ENCODE measurements at regions of chr3 and their contacts with region 1.

Region 1: GRCh38 chr3:157136647-157137387 is 23.1 kb downstream of the CCNL1 start:
- DNase-seq: peak; percentile 35 to 46
- H3K4me3 ChIP-seq: no peak overlapping the region; the same call in 1 of the 2 replicates
- H3K27ac ChIP-seq: no peak overlapping the region
- H3K4me1 ChIP-seq: peaks cover 25% of the 10 kb centered on the region
- H3K27me3 ChIP-seq: no peaks in the 10 kb centered on the region
- CTCF ChIP-seq: no peak

Region 2: DNA sequence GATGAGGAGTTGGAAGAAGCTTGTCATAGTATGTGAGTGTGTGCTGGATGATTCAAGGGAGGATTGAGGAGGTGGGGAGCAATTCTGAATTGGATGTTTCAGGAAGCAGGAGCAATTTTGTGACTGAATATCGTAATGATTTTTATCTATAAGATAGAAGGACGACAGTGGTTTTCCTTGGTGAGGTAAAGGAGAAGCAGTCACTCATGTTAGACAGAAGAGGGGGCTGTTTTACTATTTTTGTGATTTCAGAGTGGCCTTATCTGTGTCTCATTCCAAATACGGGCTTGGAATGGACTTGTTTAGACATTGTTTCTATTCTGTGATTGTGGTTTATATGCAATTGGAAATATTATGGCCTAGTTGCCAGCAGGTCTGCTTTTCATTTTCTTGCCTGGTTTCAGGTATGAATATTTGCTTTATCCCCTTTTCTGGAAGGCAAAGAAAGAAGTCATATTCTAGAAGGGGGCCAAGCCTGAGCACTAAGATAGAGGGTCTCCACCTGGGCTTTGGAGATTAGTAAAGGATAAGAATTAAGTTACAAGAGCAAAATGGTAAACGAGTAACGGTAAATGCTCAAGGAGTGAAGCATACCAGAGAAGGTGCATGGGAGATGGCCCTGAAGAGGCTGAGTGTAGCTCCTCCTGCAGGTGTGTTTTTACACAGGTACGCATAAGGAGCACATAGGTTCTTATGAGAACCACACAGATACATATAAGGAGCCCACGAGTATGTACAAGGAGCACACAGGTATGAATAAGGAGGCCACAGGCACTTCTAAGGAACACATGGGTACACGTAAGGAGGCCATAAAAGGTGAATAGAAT is 1141.1 kb before region 1 on chr3:
- CTCF ChIA-PET with region 1: no interaction called
- POLR2A ChIA-PET with region 1: no interaction called
- intact Hi-C with region 1: loop called (anchors 5 kb)
- DNase-seq: peak in 1 of 2 experiments; percentile 54
- H3K4me3 ChIP-seq: no peak overlapping the region
- H3K27ac ChIP-seq: no peak overlapping the region
- H3K4me1 ChIP-seq: no peaks in the 10 kb centered on the region
- H3K27me3 ChIP-seq: no peaks in the 10 kb centered on the region
- CTCF ChIP-seq: peak; percentile 80

Region 3: GRCh38 chr3:156040041-156040440 is 1096.8 kb before region 1 on chr3:
- CTCF ChIA-PET with region 1: interaction called, 3 read pairs
- POLR2A ChIA-PET with region 1: no interaction called
- intact Hi-C with region 1: loop called (anchors 5 kb)
- DNase-seq: no peak
- H3K4me3 ChIP-seq: no peak overlapping the region
- H3K27ac ChIP-seq: no peak overlapping the region
- H3K4me1 ChIP-seq: no peaks in the 10 kb centered on the region
- H3K27me3 ChIP-seq: no peaks in the 10 kb centered on the region
- CTCF ChIP-seq: no peak

Region 4: GRCh38 chr3:156535162-156535627 is 601.6 kb before region 1 on chr3:
- CTCF ChIA-PET with region 1: interaction called, 5 read pairs
- POLR2A ChIA-PET with region 1: no interaction called
- intact Hi-C with region 1: loop called (anchors 1 kb)
- DNase-seq: peak; percentile 70 to 98
- H3K4me3 ChIP-seq: no peak overlapping the region
- H3K27ac ChIP-seq: peak overlapping the region; percentile 72
- H3K4me1 ChIP-seq: peaks cover 21% of the 10 kb centered on the region
- H3K27me3 ChIP-seq: no peaks in the 10 kb centered on the region
- CTCF ChIP-seq: peak; percentile 59

Region 5: DNA sequence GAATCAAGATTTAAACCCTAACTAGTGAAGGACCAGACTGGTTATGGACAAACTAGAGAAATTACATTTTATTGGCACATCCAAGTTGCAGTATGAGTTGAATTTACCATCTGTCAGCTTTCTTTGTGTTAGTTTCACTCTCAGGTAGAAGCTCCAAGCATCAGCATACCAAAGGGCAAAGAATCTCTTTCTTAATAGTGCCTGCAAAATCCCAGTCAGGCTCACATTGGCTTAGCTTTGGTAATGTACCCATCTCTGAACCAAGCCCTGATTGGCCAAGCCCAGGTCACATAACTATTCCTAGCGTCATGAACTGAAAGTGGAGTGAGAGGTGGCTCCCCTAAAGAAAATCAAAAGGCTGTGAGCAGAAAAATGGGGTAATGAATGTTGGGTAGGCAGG is 43.7 kb before region 1 on chr3:
- CTCF ChIA-PET with region 1: no interaction called
- POLR2A ChIA-PET with region 1: no interaction called
- intact Hi-C with region 1: no loop called
- DNase-seq: no peak
- H3K4me3 ChIP-seq: no peak overlapping the region
- H3K27ac ChIP-seq: no peak overlapping the region
- H3K4me1 ChIP-seq: peaks cover 16% of the 10 kb centered on the region
- H3K27me3 ChIP-seq: no peaks in the 10 kb centered on the region
- CTCF ChIP-seq: no peak

Region 6: DNA sequence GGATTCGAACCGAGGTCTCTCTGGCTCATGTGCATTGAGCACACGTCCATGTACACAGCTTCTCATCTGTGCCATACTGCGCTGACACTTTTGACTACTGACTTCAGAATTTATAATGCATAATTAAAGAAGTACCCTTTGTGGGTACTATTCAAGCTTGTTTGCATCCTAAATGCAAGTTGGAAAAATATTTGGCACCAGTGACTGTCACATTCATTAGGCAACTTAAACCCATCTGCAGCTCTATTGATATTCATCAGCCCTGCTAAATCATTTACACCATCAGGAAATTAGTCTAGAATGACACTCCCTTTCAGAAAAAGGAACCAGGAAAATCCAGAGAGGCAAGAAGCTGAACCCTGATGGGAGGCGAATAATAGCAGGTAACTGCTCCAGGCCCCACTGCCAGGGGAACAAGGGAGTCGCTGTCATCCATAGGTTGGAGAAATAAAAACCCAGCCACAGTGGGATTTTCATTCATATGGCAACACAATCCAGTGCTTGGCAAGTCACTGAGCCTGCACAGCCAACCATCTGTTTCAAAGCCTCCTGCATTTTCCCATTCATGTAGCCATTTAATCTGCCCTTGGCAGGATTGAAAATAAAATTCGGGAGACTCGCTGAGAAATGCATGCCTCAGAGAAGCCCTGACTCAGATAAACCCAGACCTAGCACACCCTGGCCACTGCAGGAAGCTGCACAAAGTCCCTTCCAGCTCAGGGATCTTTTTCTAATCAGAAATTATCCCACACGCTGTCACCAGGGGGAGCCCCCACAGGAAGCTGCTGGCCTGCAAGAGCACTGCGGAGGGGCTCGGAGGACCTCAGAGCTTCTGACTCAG is 469.4 kb after region 1 on chr3:
- CTCF ChIA-PET with region 1: no interaction called
- POLR2A ChIA-PET with region 1: no interaction called
- intact Hi-C with region 1: no loop called
- DNase-seq: peak; percentile 45 to 68
- H3K4me3 ChIP-seq: no peak overlapping the region
- H3K27ac ChIP-seq: no peak overlapping the region
- H3K4me1 ChIP-seq: no peaks in the 10 kb centered on the region
- H3K27me3 ChIP-seq: no peaks in the 10 kb centered on the region
- CTCF ChIP-seq: peak; percentile 91